Naive thymus-derived CD4-positive, alpha-beta T cell (primary cell): ENCODE measurements at regions of chr10 and their contacts with region 1.

Region 1: GRCh38 chr10:121974535-121975294 is at the start of gene NSMCE4A:
- DNase-seq: peak; percentile 47 to 81 (median 62)
- ATAC-seq: peak; percentile 90
- H3K4me3 ChIP-seq: peak within 1 kb of the TSS; percentile 86
- H3K4me3 Mint-ChIP-seq: peak within 1 kb of the TSS; percentile 72 to 86 (median 81)
- H3K27ac ChIP-seq: peak within 1 kb of the TSS; percentile 74
- H3K27ac Mint-ChIP-seq: peak within 1 kb of the TSS in 6 of 9 donors; percentile 36 to 77 (median 60)
- H3K4me1 ChIP-seq: peaks cover 6 to 11% of the 10 kb centered on the region in 2 donors
- H3K4me1 Mint-ChIP-seq: peaks cover 15 to 35% (median 22%) of the 10 kb centered on the region in 7 donors
- H3K27me3 ChIP-seq: no peaks in the 10 kb centered on the region
- H3K27me3 Mint-ChIP-seq: no peaks in the 10 kb centered on the region
- total RNA-seq, gene NSMCE4A: 34.7 to 87.2 (median 69.4) TPM

Region 2: GRCh38 chr10:121732656-121733445 is 241.9 kb before region 1 on chr10:
- CTCF ChIA-PET with region 1: no interaction called
- POLR2A ChIA-PET with region 1: no interaction called
- intact Hi-C with region 1: no loop called
- DNase-seq: no peak
- ATAC-seq: no peak
- H3K4me3 ChIP-seq: no peak overlapping the region
- H3K4me3 Mint-ChIP-seq: no peak overlapping the region
- H3K27ac ChIP-seq: no peak overlapping the region
- H3K27ac Mint-ChIP-seq: no peak overlapping the region
- H3K4me1 ChIP-seq: no peaks in the 10 kb centered on the region
- H3K4me1 Mint-ChIP-seq: peaks cover 0 to 10% (median 5%) of the 10 kb centered on the region in 7 donors
- H3K27me3 ChIP-seq: peaks cover 0 to 3% of the 10 kb centered on the region in 2 donors
- H3K27me3 Mint-ChIP-seq: peaks cover 11 to 37% (median 24%) of the 10 kb centered on the region in 5 donors

Region 3: DNA sequence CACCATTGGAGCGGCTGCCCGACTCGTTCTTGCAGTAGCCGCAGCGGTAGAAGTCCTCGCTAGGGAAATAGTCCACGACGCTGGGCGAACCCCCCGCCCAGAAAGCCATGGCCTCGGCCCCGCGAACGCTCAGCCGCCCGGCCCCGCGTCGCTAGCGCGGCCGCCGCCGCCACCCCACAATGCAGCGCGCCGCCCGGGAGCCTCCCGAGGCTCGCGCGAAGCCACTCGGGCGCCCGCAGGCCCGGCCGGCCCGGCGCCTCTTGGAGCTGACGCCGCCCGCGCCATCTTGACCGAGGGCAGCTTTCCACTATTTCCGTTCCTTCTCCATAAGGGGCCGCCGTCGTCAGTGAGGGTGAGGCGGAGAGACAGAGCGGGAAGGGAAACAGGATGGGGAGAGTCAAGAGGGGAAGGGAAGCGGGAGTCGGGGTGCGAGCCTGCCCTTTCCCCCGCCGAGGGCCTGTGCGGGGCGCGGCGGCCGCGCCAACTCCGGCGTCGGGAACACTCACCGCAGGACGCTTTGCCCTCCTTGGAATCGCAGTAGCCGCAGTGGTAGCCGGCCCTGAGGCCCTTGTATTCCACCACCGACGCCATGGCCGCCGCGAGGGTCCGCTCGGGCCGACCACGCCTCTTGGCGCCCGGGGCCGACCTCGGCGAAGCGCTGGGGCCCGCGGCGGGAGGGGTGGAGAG is 46.7 kb before region 1 on chr10 and contains the start of gene ATE1:
- CTCF ChIA-PET with region 1: interaction called, 3 read pairs
- POLR2A ChIA-PET with region 1: interaction called, 5 read pairs
- intact Hi-C with region 1: loop called (anchors 1 kb)
- DNase-seq: peak; percentile 74 to 86 (median 80)
- ATAC-seq: peak; percentile 98
- H3K4me3 ChIP-seq: peak within 1 kb of the TSS; percentile 65
- H3K4me3 Mint-ChIP-seq: peak within 1 kb of the TSS; percentile 88 to 96 (median 92)
- H3K27ac ChIP-seq: peak within 1 kb of the TSS; percentile 96
- H3K27ac Mint-ChIP-seq: peak within 1 kb of the TSS; percentile 79 to 98 (median 94)
- H3K4me1 ChIP-seq: peaks cover 0 to 13% of the 10 kb centered on the region in 2 donors
- H3K4me1 Mint-ChIP-seq: peaks cover 15 to 48% (median 39%) of the 10 kb centered on the region in 7 donors
- H3K27me3 ChIP-seq: no peaks in the 10 kb centered on the region
- H3K27me3 Mint-ChIP-seq: no peaks in the 10 kb centered on the region
- total RNA-seq, gene ATE1: 23.0 to 26.6 (median 26.2) TPM

Region 4: GRCh38 chr10:121947343-121948330 is 27.1 kb before region 1 on chr10:
- CTCF ChIA-PET with region 1: no interaction called
- POLR2A ChIA-PET with region 1: no interaction called
- intact Hi-C with region 1: no loop called
- DNase-seq: no peak
- ATAC-seq: no peak
- H3K4me3 ChIP-seq: no peak overlapping the region
- H3K4me3 Mint-ChIP-seq: no peak overlapping the region
- H3K27ac ChIP-seq: no peak overlapping the region
- H3K27ac Mint-ChIP-seq: peak overlapping the region in 1 of 9 donors; percentile 3
- H3K4me1 ChIP-seq: no peaks in the 10 kb centered on the region
- H3K4me1 Mint-ChIP-seq: peaks cover 0 to 11% (median 0%) of the 10 kb centered on the region in 7 donors
- H3K27me3 ChIP-seq: no peaks in the 10 kb centered on the region
- H3K27me3 Mint-ChIP-seq: peaks cover 0 to 4% (median 0%) of the 10 kb centered on the region in 5 donors

Region 5: GRCh38 chr10:121959671-121960070 is 15.0 kb before region 1 on chr10:
- CTCF ChIA-PET with region 1: no interaction called
- POLR2A ChIA-PET with region 1: no interaction called
- intact Hi-C with region 1: no loop called
- DNase-seq: no peak
- ATAC-seq: no peak
- H3K4me3 ChIP-seq: no peak overlapping the region
- H3K4me3 Mint-ChIP-seq: no peak overlapping the region
- H3K27ac ChIP-seq: no peak overlapping the region
- H3K27ac Mint-ChIP-seq: no peak overlapping the region
- H3K4me1 ChIP-seq: no peaks in the 10 kb centered on the region
- H3K4me1 Mint-ChIP-seq: no peaks in the 10 kb centered on the region
- H3K27me3 ChIP-seq: no peaks in the 10 kb centered on the region
- H3K27me3 Mint-ChIP-seq: no peaks in the 10 kb centered on the region